Uterus (tissue), 4 donors: ENCODE measurements at regions of chr5 and their contacts with region 1.

Region 1: GRCh38 chr5:172479044-172479783 is 24.9 kb upstream of the SH3PXD2B start:
- DNase-seq: peak; percentile 86 to 88
- H3K4me3 ChIP-seq: no peak overlapping the region
- H3K27ac ChIP-seq: peak overlapping the region; percentile 47 to 66
- H3K4me1 ChIP-seq: no peaks in the 10 kb centered on the region
- H3K27me3 ChIP-seq: no peaks in the 10 kb centered on the region
- CTCF ChIP-seq: peak; percentile 80 to 99 (median 94)
- POLR2A ChIP-seq: no peak

Region 2: GRCh38 chr5:172322028-172322965 is 156.9 kb before region 1 on chr5:
- intact Hi-C with region 1: no loop called
- DNase-seq: no peak
- H3K4me3 ChIP-seq: no peak overlapping the region
- H3K27ac ChIP-seq: no peak overlapping the region
- H3K4me1 ChIP-seq: no peaks in the 10 kb centered on the region
- H3K27me3 ChIP-seq: no peaks in the 10 kb centered on the region
- CTCF ChIP-seq: no peak
- POLR2A ChIP-seq: no peak

Region 3: GRCh38 chr5:172616730-172617129 is 137.5 kb after region 1 on chr5:
- intact Hi-C with region 1: no loop called
- DNase-seq: peak; percentile 65 to 78
- H3K4me3 ChIP-seq: no peak overlapping the region
- H3K27ac ChIP-seq: peak overlapping the region; percentile 70 to 91
- H3K4me1 ChIP-seq: peaks cover 0 to 6% of the 10 kb centered on the region in 2 donors
- H3K27me3 ChIP-seq: no peaks in the 10 kb centered on the region
- CTCF ChIP-seq: no peak
- POLR2A ChIP-seq: no peak

Region 4: DNA sequence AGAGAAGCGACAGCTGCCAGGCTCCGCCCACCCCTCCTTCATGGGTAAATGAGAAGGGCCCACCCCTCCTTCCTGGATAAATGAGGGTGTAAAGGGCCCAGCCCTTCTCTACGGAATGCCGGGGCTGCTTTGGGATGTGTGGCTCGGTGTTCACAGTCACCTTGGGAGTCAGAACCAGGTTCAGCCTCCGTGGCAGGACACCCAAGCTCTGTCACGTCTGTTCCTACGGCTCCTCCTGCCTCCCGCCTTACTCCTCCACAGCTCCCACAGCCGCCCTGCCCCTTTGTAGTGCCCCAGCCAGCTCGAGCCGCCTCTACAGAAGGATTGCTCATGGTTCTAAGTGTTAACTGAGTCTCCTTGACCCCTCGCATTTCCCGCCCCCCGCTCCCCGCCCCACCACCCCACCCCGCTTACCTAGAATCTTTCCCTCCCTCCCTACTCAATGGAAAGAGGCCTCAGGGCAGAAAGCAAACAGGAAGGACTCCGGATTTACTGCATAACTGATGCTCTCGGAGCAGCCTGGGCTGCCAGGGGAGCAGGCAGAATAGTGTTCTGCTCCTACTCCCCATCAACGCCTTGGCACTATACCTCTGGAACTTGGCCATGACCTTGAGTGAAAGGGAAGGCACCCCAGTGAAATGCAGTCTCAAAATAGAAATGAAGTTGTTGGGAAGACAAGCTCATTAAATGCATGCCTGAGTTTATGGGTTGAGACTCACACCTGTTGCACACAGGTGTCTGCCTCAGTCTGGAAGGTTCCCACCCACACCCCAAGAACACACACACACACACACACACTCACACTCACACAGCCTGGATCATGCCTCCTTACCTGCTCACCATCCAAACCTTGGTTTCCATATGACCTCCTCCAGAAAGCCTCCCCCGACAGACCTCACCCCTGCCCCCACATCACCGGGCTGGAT is 221.4 kb after region 1 on chr5:
- intact Hi-C with region 1: loop called (anchors 2 kb)
- DNase-seq: no peak
- H3K4me3 ChIP-seq: no peak overlapping the region
- H3K27ac ChIP-seq: peak overlapping the region; percentile 44 to 64
- H3K4me1 ChIP-seq: peaks cover 0 to 10% of the 10 kb centered on the region in 2 donors
- H3K27me3 ChIP-seq: no peaks in the 10 kb centered on the region
- CTCF ChIP-seq: no peak
- POLR2A ChIP-seq: no peak

Region 5: GRCh38 chr5:172932313-172933017 is 453.3 kb after region 1 on chr5:
- intact Hi-C with region 1: loop called (anchors 10 kb)
- DNase-seq: peak; percentile 75 to 78
- H3K4me3 ChIP-seq: no peak overlapping the region
- H3K27ac ChIP-seq: peak overlapping the region; percentile 77 to 82
- H3K4me1 ChIP-seq: peaks cover 0 to 4% of the 10 kb centered on the region in 2 donors
- H3K27me3 ChIP-seq: no peaks in the 10 kb centered on the region
- CTCF ChIP-seq: peak; percentile 96 to 98 (median 98)
- POLR2A ChIP-seq: no peak